ENCODE measurements at regions of chr11 and their contacts with region 1.

Region 1: DNA sequence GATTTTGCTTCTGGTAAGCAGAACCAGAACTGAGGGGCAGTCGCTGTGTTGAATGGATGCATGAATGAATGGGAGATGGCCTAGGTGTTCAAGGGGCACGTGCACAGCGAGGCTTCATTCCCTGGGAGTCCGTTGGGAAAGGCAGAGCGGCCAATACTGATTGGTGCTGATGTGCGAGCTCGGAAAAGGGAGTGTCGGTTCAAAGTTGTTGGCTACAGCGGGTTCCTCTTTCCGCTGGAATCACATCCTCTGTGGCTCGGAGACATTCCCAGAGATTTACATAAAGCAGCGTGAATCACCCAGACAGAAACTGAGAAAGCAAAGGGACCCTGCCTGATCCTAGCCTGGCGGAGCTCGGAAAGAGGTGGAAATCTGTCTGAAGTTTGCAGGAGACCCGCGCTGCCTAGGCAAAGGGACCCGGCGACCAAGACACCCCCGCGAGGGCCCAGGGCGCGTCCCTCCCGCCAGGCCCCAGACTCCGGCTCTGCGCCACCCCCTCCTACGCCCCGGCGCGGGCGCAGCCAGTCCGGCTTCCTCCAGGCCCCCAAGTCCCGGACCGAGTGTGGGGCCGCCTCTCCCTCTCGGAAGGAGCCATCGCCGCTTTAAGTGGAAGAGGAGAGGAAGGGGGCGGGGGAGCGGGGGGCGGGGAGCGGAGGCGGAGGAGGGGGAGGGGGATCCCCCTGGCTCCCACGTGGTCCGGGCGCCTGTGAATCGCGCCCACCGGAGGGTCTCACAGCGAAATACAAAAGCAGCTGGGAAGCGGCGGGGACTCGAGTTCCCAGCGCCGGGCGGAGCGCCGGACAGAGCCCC is at the start of gene FJX1:
- DNase-seq: peak; percentile 95
- ATAC-seq: peak; percentile 68
- H3K4me3 ChIP-seq: peak within 1 kb of the TSS; percentile 67
- H3K27ac ChIP-seq: peak within 1 kb of the TSS; percentile 90
- H3K4me1 ChIP-seq: peaks cover 9% of the 10 kb centered on the region
- H3K27me3 ChIP-seq: no peaks in the 10 kb centered on the region
- CTCF ChIP-seq: no peak
- POLR2A ChIP-seq: peak; percentile 79
- RAD21 ChIP-seq: peak; percentile 26; the same call in 1 of the 2 replicates
- total RNA-seq, gene FJX1: 8.1 and 8.4 TPM in 2 replicates

Region 2: GRCh38 chr11:35485656-35486322 is 132.1 kb before region 1 on chr11:
- CTCF ChIA-PET with region 1: interaction called, 3 read pairs
- POLR2A ChIA-PET with region 1: interaction called, 3 read pairs
- dilution Hi-C with region 1: no loop called
- in situ Hi-C with region 1: no loop called
- intact Hi-C with region 1: loop called (anchors 1 kb)
- DNase-seq: peak; percentile 79
- ATAC-seq: peak; percentile 81
- H3K4me3 ChIP-seq: no peak overlapping the region
- H3K27ac ChIP-seq: no peak overlapping the region
- H3K4me1 ChIP-seq: peaks cover 17% of the 10 kb centered on the region
- H3K27me3 ChIP-seq: no peaks in the 10 kb centered on the region
- CTCF ChIP-seq: peak; percentile 90
- POLR2A ChIP-seq: no peak
- RAD21 ChIP-seq: peak; percentile 84

Region 3: DNA sequence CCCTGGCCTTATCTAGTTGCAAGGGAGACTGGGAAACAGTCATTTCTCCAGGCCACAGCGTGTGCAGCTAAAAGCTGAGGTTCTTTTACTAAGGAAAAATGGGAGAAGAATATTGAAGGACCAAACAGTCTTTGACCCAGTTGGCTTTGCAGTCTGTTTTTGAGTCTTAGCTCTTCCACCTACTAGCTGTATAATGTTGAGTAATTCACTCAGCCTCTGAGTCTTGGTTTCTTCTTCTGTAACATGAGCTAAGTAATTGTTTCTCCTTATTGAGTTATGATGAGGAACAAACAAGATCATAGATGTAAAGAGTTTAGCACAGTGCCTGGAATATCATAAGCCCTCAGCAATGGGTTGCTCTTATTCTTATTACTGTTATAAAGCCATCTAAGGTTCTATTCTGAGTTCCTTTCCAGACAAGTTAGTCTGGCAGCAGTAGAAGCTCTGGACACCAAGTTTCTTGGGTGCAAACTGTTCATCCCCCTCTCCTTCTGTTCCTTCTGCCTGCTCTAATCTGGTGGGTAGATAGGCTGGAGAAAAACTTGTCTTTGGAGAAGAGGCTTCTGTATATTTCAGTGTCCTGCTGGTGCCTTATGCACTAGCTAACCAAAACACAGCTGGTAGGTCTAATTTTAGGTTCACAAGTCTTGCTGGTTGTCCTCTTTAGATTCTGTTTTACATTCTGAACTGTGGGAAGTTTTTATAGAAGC is 58.2 kb after region 1 on chr11:
- CTCF ChIA-PET with region 1: no interaction called
- POLR2A ChIA-PET with region 1: no interaction called
- dilution Hi-C with region 1: no loop called
- in situ Hi-C with region 1: no loop called
- intact Hi-C with region 1: loop called (anchors 5 kb)
- DNase-seq: peak; percentile 45
- ATAC-seq: peak; percentile 60
- H3K4me3 ChIP-seq: no peak overlapping the region
- H3K27ac ChIP-seq: no peak overlapping the region
- H3K4me1 ChIP-seq: peaks cover 7% of the 10 kb centered on the region
- H3K27me3 ChIP-seq: no peaks in the 10 kb centered on the region
- CTCF ChIP-seq: no peak
- POLR2A ChIP-seq: no peak
- RAD21 ChIP-seq: no peak

Region 4: GRCh38 chr11:35740061-35740799 is 122.3 kb after region 1 on chr11:
- CTCF ChIA-PET with region 1: no interaction called
- POLR2A ChIA-PET with region 1: no interaction called
- dilution Hi-C with region 1: no loop called
- in situ Hi-C with region 1: no loop called
- intact Hi-C with region 1: no loop called
- DNase-seq: no peak
- ATAC-seq: no peak
- H3K4me3 ChIP-seq: no peak overlapping the region
- H3K27ac ChIP-seq: no peak overlapping the region
- H3K4me1 ChIP-seq: no peaks in the 10 kb centered on the region
- H3K27me3 ChIP-seq: no peaks in the 10 kb centered on the region
- CTCF ChIP-seq: no peak
- POLR2A ChIP-seq: no peak
- RAD21 ChIP-seq: no peak

Region 5: DNA sequence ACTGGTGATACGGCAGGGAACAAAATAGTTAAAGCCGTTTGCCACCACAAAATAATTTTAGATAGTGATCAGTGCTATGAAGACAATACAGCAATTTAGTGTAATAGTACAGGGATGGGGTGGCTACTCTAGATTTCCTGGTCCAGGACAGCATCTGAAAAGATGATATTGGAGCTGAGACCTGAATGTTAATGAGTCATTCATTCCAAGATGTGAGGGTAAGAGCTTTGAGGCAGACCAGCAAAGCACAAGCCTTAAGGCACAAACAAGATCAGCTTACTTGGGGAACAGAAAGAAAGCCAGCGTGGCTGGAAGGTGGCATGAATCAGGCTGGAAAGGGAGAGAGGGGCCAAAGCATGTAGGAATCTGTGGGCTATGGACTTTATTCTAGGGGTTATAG is 177.0 kb after region 1 on chr11:
- CTCF ChIA-PET with region 1: no interaction called
- POLR2A ChIA-PET with region 1: no interaction called
- dilution Hi-C with region 1: no loop called
- in situ Hi-C with region 1: no loop called
- intact Hi-C with region 1: no loop called
- DNase-seq: peak; percentile 88
- ATAC-seq: peak; percentile 73
- H3K4me3 ChIP-seq: no peak overlapping the region
- H3K27ac ChIP-seq: no peak overlapping the region
- H3K4me1 ChIP-seq: peaks cover 15% of the 10 kb centered on the region
- H3K27me3 ChIP-seq: no peaks in the 10 kb centered on the region
- CTCF ChIP-seq: no peak
- POLR2A ChIP-seq: no peak
- RAD21 ChIP-seq: no peak

Region 6: DNA sequence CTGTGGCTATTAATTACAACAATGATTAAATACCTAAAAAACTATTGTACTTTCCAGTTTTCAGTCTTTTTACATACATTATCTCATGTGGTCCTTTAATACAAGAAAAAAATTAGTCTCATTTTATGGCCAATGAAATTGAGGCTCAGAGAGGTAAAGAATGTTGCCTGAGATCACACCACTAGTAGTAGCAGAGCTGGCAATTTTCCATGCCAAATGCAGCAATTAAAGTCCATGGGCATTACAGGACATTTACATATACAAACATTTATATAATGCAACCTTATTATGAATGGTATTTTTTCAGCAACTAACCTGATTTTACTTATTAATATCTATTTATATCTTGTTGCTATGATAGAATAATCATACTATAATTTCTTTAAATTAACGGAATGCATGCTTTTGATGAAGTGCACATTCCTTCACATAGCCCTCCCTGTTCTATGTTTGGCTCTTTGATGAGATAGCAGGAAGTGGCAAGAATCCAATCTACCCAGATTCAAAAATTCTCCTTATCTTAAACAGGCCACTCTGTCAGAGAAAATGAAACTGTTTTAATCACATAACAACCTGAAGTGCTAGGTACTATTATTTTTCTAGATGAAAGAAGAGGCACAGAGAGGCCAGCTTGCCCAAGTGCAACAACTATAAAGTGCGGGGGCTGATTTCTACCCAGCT is 205.1 kb after region 1 on chr11:
- CTCF ChIA-PET with region 1: interaction called, 16 read pairs
- POLR2A ChIA-PET with region 1: no interaction called
- dilution Hi-C with region 1: no loop called
- in situ Hi-C with region 1: no loop called
- intact Hi-C with region 1: loop called (anchors 1 kb)
- DNase-seq: peak; percentile 13
- ATAC-seq: no peak
- H3K4me3 ChIP-seq: no peak overlapping the region
- H3K27ac ChIP-seq: no peak overlapping the region
- H3K4me1 ChIP-seq: peaks cover 2% of the 10 kb centered on the region; the same call in 1 of the 2 replicates
- H3K27me3 ChIP-seq: no peaks in the 10 kb centered on the region
- CTCF ChIP-seq: no peak
- POLR2A ChIP-seq: no peak
- RAD21 ChIP-seq: no peak

Region 7: GRCh38 chr11:35927730-35928129 is 309.8 kb after region 1 on chr11:
- CTCF ChIA-PET with region 1: no interaction called
- POLR2A ChIA-PET with region 1: no interaction called
- dilution Hi-C with region 1: no loop called
- in situ Hi-C with region 1: no loop called
- intact Hi-C with region 1: no loop called
- DNase-seq: peak; percentile 38
- ATAC-seq: no peak
- H3K4me3 ChIP-seq: no peak overlapping the region
- H3K27ac ChIP-seq: no peak overlapping the region
- H3K4me1 ChIP-seq: no peaks in the 10 kb centered on the region
- H3K27me3 ChIP-seq: peaks cover 4% of the 10 kb centered on the region
- CTCF ChIP-seq: no peak
- POLR2A ChIP-seq: no peak
- RAD21 ChIP-seq: no peak

Region 8: GRCh38 chr11:36131721-36132397 is 514.0 kb after region 1 on chr11:
- CTCF ChIA-PET with region 1: interaction called, 5 read pairs
- POLR2A ChIA-PET with region 1: no interaction called
- dilution Hi-C with region 1: no loop called
- in situ Hi-C with region 1: loop called (anchors 10 kb)
- intact Hi-C with region 1: loop called (anchors 1 kb)
- DNase-seq: peak; percentile 63
- ATAC-seq: peak; percentile 81
- H3K4me3 ChIP-seq: no peak overlapping the region
- H3K27ac ChIP-seq: no peak overlapping the region
- H3K4me1 ChIP-seq: peaks cover 2% of the 10 kb centered on the region
- H3K27me3 ChIP-seq: no peaks in the 10 kb centered on the region
- CTCF ChIP-seq: peak; percentile 72
- POLR2A ChIP-seq: no peak
- RAD21 ChIP-seq: peak; percentile 66

Region 9: GRCh38 chr11:36265793-36266628 is 648.1 kb after region 1 on chr11:
- CTCF ChIA-PET with region 1: no interaction called
- POLR2A ChIA-PET with region 1: no interaction called
- dilution Hi-C with region 1: no loop called
- in situ Hi-C with region 1: loop called (anchors 5 kb)
- intact Hi-C with region 1: no loop called
- DNase-seq: peak; percentile 42
- ATAC-seq: peak; percentile 90
- H3K4me3 ChIP-seq: no peak overlapping the region
- H3K27ac ChIP-seq: no peak overlapping the region
- H3K4me1 ChIP-seq: no peaks in the 10 kb centered on the region
- H3K27me3 ChIP-seq: peaks cover 26% of the 10 kb centered on the region
- CTCF ChIP-seq: peak; percentile 82
- POLR2A ChIP-seq: no peak
- RAD21 ChIP-seq: peak; percentile 92

Measured in IMR-90 (cell line).